K562 (cell line): ENCODE measurements at regions of chr14 and their contacts with region 1.

Region 1: DNA sequence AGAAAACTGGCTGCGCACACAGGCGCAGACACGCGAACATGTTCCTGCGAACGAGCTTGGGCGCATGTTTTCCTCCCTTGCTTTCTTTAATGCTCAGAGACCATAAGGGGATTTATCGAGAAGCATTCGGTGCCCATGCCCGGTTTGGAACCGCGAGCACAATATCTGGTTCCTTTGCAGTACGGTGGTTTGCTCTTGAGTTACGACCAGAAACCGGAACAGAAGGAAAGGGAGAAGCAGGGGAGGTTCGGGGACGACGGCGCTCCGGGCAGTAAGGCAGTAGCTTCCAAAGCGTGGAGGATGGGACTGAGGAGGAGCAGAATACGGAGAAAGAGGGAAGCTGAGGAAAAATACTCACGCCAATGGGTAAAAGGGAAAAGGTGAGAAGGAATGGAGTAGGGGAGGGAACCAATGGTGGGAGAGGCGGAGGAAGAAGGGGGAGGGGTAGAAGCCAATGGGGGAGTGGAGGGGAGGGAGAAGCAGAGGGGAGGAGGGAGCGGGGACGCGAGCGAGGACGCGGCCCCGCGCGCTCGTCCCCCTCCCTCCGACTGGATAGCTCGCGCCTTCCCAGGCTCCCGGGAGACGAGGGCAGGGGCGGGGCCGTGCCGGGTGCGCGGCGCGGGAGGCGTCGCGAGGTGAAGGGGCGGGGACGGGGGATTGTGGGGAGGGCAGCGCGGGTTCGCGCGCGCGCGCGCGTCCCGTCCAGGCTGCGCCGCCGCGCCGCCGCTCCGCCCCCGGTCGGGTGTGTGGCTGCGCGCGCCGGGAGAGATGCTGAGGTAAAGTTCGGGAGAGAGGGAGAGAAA is 625 bp upstream of the ARHGAP5 start:
- DNase-seq: peak; percentile 82 to 95 (median 84)
- ATAC-seq: peak; percentile 84
- H3K4me3 ChIP-seq: peak overlapping the region; percentile 78
- H3K27ac ChIP-seq: peak overlapping the region; percentile 91
- H3K4me1 ChIP-seq: no peaks in the 10 kb centered on the region; a peak in 1 of 5 replicates
- H3K27me3 ChIP-seq: no peaks in the 10 kb centered on the region
- CTCF ChIP-seq: no peak
- EP300 ChIP-seq: no peak
- POLR2A ChIP-seq: peak; percentile 75
- RAD21 ChIP-seq: no peak

Region 2: DNA sequence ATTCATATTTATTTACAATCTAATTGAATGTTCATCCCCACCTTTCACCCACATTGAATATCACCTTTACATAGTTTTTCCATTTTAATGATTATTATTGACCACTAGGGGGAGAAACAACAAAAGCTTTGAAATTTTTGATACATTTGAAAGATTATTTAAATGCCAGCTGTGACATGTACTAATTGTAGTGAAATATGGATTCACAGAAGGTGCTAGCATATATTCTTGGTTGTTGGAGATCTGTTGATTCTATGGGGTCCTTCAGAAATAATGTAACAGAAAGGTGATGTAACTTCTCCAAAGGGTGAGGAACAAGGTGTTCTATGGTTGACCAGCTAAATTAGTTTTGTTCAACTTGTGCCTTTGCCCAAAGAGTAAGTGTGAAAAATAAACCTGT is 566.3 kb before region 1 on chr14:
- CTCF ChIA-PET with region 1: no interaction called
- POLR2A ChIA-PET with region 1: no interaction called
- in situ Hi-C with region 1: no loop called
- intact Hi-C with region 1: loop called (anchors 10 kb)
- DNase-seq: peak; percentile 9 to 21 (median 14)
- ATAC-seq: no peak
- H3K4me3 ChIP-seq: no peak overlapping the region
- H3K27ac ChIP-seq: no peak overlapping the region
- H3K4me1 ChIP-seq: no peaks in the 10 kb centered on the region
- H3K27me3 ChIP-seq: no peaks in the 10 kb centered on the region; a peak in 1 of 5 replicates
- CTCF ChIP-seq: peak in 2 of 3 experiments; percentile 9 to 49; a peak in 3 of 6 replicates
- EP300 ChIP-seq: no peak
- POLR2A ChIP-seq: no peak
- RAD21 ChIP-seq: peak; percentile 41 to 70; a peak in 3 of 4 replicates

Region 3: GRCh38 chr14:31937721-31938346 is 138.6 kb before region 1 on chr14:
- CTCF ChIA-PET with region 1: no interaction called
- POLR2A ChIA-PET with region 1: no interaction called
- in situ Hi-C with region 1: no loop called
- intact Hi-C with region 1: loop called (anchors 1 kb)
- DNase-seq: peak; percentile 36 to 79 (median 48)
- ATAC-seq: peak; percentile 98
- H3K4me3 ChIP-seq: no peak overlapping the region
- H3K27ac ChIP-seq: peak overlapping the region; percentile 76
- H3K4me1 ChIP-seq: peaks cover 0 to 3% of the 10 kb centered on the region in 2 experiments; a peak in 4 of 5 replicates
- H3K27me3 ChIP-seq: no peaks in the 10 kb centered on the region
- CTCF ChIP-seq: no peak
- EP300 ChIP-seq: peak; percentile 56; the same call in 1 of the 2 replicates
- POLR2A ChIP-seq: no peak
- RAD21 ChIP-seq: peak in 1 of 2 experiments; percentile 17; a peak in 2 of 4 replicates

Region 4: DNA sequence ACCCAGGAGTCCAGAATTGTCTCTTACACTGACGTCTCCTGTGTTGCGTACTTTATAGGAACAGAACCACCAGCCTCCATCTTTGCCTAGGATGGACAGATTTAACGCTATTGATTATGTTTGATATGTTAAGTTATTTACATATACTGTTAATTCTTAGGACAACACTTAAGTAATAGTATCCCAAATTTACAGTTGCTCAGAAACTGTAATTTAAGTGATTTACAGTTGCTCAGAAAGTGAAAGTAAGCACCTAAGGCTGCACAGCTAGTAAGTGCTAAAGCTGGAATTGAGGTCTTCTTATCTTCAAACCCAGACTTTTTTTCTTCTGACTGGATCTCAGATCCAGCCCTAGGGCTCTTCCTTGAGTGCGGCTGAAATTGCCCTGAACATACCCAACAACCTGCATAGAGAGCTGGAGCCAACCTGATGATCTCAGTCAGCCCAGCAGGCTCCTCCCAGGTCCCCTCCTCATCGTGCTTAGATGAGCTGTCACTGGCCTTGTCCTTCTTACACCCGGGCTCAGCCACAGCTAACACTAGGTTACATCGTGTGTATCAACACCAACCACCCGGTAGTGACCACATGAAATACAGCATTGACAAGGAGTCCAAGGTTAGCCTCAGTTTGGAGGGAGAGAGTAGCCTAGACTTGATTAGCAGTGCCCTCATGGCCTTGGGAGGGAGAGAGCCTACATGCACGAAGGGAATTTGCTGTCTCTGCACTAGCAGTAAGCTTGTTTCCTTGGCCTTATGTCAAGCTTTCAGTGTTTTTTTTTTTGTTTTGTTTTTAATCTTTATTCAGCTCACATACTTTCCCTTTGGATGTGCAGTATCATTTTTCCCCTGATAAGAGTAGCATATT is 110.5 kb before region 1 on chr14:
- CTCF ChIA-PET with region 1: no interaction called
- POLR2A ChIA-PET with region 1: no interaction called
- in situ Hi-C with region 1: no loop called
- intact Hi-C with region 1: no loop called
- DNase-seq: peak; percentile 44 to 60 (median 54)
- ATAC-seq: peak; percentile 92
- H3K4me3 ChIP-seq: no peak overlapping the region
- H3K27ac ChIP-seq: peak overlapping the region; percentile 59; the same call in 2 of the 3 replicates
- H3K4me1 ChIP-seq: peaks cover 0 to 5% of the 10 kb centered on the region in 2 experiments; a peak in 3 of 5 replicates
- H3K27me3 ChIP-seq: no peaks in the 10 kb centered on the region
- CTCF ChIP-seq: no peak
- EP300 ChIP-seq: no peak
- POLR2A ChIP-seq: no peak
- RAD21 ChIP-seq: no peak

Region 5: GRCh38 chr14:32202998-32203882 is 126.8 kb after region 1 on chr14 and contains the start of gene RNU6-8:
- CTCF ChIA-PET with region 1: no interaction called
- POLR2A ChIA-PET with region 1: interaction called, 4 read pairs
- in situ Hi-C with region 1: loop called (anchors 5 kb)
- intact Hi-C with region 1: loop called (anchors 1 kb)
- DNase-seq: peak; percentile 79 to 87 (median 83)
- ATAC-seq: peak; percentile 92
- H3K4me3 ChIP-seq: peak within 1 kb of the TSS; percentile 62
- H3K27ac ChIP-seq: peak within 1 kb of the TSS; percentile 89
- H3K4me1 ChIP-seq: peaks cover 3 to 8% of the 10 kb centered on the region in 2 experiments; a peak in 3 of 5 replicates
- H3K27me3 ChIP-seq: no peaks in the 10 kb centered on the region
- CTCF ChIP-seq: no peak
- EP300 ChIP-seq: no peak
- POLR2A ChIP-seq: peak; percentile 54; the same call in 1 of the 2 replicates
- RAD21 ChIP-seq: no peak; a peak in 1 of 4 replicates
- polyA plus RNA-seq, gene RNU6-8: not detected

Region 6: GRCh38 chr14:32469388-32470160 is 393.1 kb after region 1 on chr14:
- CTCF ChIA-PET with region 1: no interaction called
- POLR2A ChIA-PET with region 1: no interaction called
- in situ Hi-C with region 1: loop called (anchors 25 kb)
- intact Hi-C with region 1: no loop called
- DNase-seq: peak; percentile 5 to 29 (median 8)
- ATAC-seq: no peak
- H3K4me3 ChIP-seq: no peak overlapping the region
- H3K27ac ChIP-seq: no peak overlapping the region
- H3K4me1 ChIP-seq: no peaks in the 10 kb centered on the region
- H3K27me3 ChIP-seq: peaks cover 0 to 5% of the 10 kb centered on the region in 2 experiments; a peak in 2 of 5 replicates
- CTCF ChIP-seq: peak in 1 of 3 experiments; percentile 63; a peak in 2 of 6 replicates
- EP300 ChIP-seq: no peak
- POLR2A ChIP-seq: no peak
- RAD21 ChIP-seq: peak; percentile 68 to 72